ENCODE measurements at regions of chr17 and their contacts with region 1.

Region 1: GRCh38 chr17:75693500-75694481 is 26.7 kb downstream of the SAP30BP start:
- DNase-seq: peak; percentile 99
- ATAC-seq: peak; percentile 77
- H3K4me3 ChIP-seq: no peak overlapping the region
- H3K27ac ChIP-seq: peak overlapping the region; percentile 86
- H3K4me1 ChIP-seq: peaks cover 88% of the 10 kb centered on the region
- H3K27me3 ChIP-seq: no peaks in the 10 kb centered on the region
- CTCF ChIP-seq: peak; percentile 38; the same call in 1 of the 2 replicates

Region 2: GRCh38 chr17:75749545-75750389 is 56.0 kb after region 1 on chr17:
- CTCF ChIA-PET with region 1: interaction called, 10 read pairs
- POLR2A ChIA-PET with region 1: no interaction called
- intact Hi-C with region 1: no loop called
- DNase-seq: peak; percentile 79
- ATAC-seq: peak; percentile 78
- H3K4me3 ChIP-seq: no peak overlapping the region
- H3K27ac ChIP-seq: no peak overlapping the region
- H3K4me1 ChIP-seq: no peaks in the 10 kb centered on the region
- H3K27me3 ChIP-seq: no peaks in the 10 kb centered on the region
- CTCF ChIP-seq: peak; percentile 98

Region 3: DNA sequence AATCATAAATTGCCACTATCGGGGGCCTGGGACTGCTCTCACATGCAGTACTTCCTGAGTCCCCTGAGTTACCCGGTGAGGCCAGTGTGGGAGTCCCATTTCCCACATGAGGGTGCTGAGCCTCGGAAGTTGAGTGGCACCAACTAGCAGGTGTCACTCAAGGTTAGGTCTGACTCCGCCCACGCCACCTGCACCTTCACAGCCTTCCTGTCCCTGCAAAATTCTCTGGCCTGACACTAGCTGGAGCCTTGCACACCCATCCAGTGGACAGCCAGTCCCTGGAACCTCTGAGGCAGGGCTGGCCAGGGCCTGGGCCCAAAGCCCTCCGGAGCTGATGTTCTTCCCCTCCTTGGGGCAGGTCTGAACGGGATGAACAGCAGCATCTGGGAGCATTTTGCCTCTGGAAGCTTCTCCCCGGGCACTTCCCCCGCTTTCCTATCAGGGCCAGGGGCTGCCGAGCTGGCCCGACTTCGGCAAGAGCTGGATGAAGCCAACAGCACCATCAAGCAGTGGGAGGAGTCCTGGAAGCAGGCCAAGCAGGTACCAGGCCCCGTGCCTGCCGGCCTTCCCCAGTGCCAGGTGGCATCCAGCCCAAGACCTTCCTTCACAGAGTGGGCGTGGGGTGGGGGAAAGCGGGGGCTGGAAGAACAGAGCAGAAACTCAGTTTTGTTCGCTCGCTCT is 128.5 kb after region 1 on chr17:
- CTCF ChIA-PET with region 1: no interaction called
- POLR2A ChIA-PET with region 1: no interaction called
- intact Hi-C with region 1: no loop called
- DNase-seq: no peak
- ATAC-seq: no peak
- H3K4me3 ChIP-seq: no peak overlapping the region
- H3K27ac ChIP-seq: no peak overlapping the region
- H3K4me1 ChIP-seq: no peaks in the 10 kb centered on the region
- H3K27me3 ChIP-seq: no peaks in the 10 kb centered on the region
- CTCF ChIP-seq: no peak

Measured in PC-3 (cell line).